WTC11 (cell line): ENCODE measurements at regions of chr7 and their contacts with region 1.

Region 1: DNA sequence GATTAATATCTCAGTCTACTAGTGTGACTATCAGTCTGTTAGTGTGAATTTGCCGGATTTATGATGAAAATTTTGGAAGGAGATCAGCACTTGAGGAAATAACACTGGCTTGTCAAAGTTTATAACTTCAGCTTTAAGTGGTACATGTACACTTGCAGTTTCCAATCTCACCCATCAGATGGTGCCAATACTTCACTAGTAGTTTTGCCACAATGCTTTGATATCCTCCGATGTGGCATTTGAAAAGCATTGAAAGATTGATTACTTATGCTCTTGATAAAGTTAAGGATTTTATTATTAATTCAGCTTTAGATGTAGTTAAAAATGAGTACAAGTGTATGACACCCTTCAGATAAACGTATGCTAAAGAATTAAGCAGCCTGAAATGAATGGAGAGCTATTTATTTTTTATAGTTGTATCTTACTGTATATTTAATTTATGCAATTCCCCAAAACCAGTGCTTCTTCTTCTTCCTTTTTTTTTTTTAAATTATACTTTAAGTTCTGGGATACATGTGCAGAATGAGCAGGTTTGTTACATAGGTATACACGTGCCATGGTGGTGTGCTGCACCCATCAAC is 98.2 kb downstream of the ANLN start:
- DNase-seq: no peak
- ATAC-seq: peak; percentile 57; the same call in 1 of the 2 replicates
- H3K4me3 Mint-ChIP-seq: no peak overlapping the region
- H3K27ac Mint-ChIP-seq: no peak overlapping the region
- H3K4me1 Mint-ChIP-seq: no peaks in the 10 kb centered on the region
- H3K27me3 Mint-ChIP-seq: no peaks in the 10 kb centered on the region
- CTCF ChIP-seq: peak; percentile 54

Region 2: DNA sequence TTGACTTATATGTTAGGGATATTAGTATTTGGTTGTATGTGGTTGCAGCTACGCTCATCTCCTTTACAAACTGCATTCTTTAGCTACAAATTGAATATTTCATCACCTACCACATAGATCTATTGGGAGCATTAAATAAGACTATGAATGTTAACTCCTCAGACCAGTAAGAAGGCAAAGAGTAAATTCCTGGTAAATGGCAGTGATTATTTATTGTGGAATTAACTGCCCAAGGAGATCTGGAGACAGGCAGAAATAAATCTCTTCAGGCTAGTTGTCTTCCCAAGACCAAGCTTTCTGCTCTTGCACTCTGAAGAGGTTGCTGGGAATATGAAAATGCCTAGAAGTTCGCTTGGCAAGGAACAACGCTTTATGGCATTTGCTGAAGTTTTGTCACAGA is 23.6 kb before region 1 on chr7:
- CTCF ChIA-PET with region 1: no interaction called
- POLR2A ChIA-PET with region 1: no interaction called
- DNase-seq: no peak
- ATAC-seq: no peak
- H3K4me3 Mint-ChIP-seq: no peak overlapping the region
- H3K27ac Mint-ChIP-seq: no peak overlapping the region
- H3K4me1 Mint-ChIP-seq: no peaks in the 10 kb centered on the region
- H3K27me3 Mint-ChIP-seq: peaks cover 3% of the 10 kb centered on the region; the same call in 1 of the 2 replicates
- CTCF ChIP-seq: no peak

Region 3: DNA sequence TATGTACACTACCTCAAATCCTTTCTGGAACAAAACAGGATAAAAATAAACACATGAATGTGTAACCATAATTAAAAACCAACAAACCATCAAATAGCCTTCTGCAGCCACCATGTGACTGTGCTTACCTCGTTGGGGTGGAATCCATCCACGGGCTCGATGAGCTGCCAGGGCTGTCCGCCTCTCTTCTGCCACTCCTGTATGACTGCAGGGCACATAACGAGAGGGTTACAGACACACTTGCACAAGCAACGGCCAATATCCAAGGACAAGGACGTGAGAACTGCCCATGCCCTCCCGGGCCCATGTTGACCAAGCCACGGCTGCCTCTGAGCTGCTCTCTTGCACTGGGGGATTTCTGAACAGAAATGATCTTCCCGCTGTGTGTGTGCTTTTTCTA is 34.1 kb after region 1 on chr7:
- CTCF ChIA-PET with region 1: no interaction called
- POLR2A ChIA-PET with region 1: no interaction called
- DNase-seq: no peak
- ATAC-seq: no peak
- H3K4me3 Mint-ChIP-seq: no peak overlapping the region
- H3K27ac Mint-ChIP-seq: no peak overlapping the region
- H3K4me1 Mint-ChIP-seq: peaks cover 8% of the 10 kb centered on the region
- H3K27me3 Mint-ChIP-seq: no peaks in the 10 kb centered on the region; the same call in 1 of the 2 replicates
- CTCF ChIP-seq: no peak

Region 4: GRCh38 chr7:37201003-37201875 is 713.4 kb after region 1 on chr7:
- CTCF ChIA-PET with region 1: interaction called, 11 read pairs
- POLR2A ChIA-PET with region 1: no interaction called
- DNase-seq: peak; percentile 85
- ATAC-seq: peak; percentile 93
- H3K4me3 Mint-ChIP-seq: no peak overlapping the region
- H3K27ac Mint-ChIP-seq: no peak overlapping the region
- H3K4me1 Mint-ChIP-seq: peaks cover 14% of the 10 kb centered on the region
- H3K27me3 Mint-ChIP-seq: no peaks in the 10 kb centered on the region
- CTCF ChIP-seq: peak; percentile 33